ENCODE measurements at regions of chr6 and their contacts with region 1.

Region 1: GRCh38 chr6:96897383-96898240 is at the start of gene NDUFAF4:
- DNase-seq: peak; percentile 92
- ATAC-seq: peak; percentile 95
- H3K4me3 ChIP-seq: peak within 1 kb of the TSS; percentile 71 to 88 (median 74)
- H3K27ac ChIP-seq: peak within 1 kb of the TSS; percentile 87
- H3K4me1 ChIP-seq: peaks cover 16% of the 10 kb centered on the region
- H3K27me3 ChIP-seq: peaks cover 0 to 3% of the 10 kb centered on the region in 2 experiments; a peak in 2 of 5 replicates
- CTCF ChIP-seq: peak; percentile 95
- EP300 ChIP-seq: peak in 1 of 2 experiments; percentile 27; a peak in 2 of 4 replicates
- POLR2A ChIP-seq: peak; percentile 75 to 81; a peak in 3 of 4 replicates
- RAD21 ChIP-seq: peak; percentile 64
- total RNA-seq, gene NDUFAF4: 59.7 and 89.4 TPM in 2 replicates

Region 2: GRCh38 chr6:96521644-96522464 is 375.8 kb before region 1 on chr6 and contains the start of gene UFL1:
- CTCF ChIA-PET with region 1: no interaction called
- POLR2A ChIA-PET with region 1: interaction called, 3 read pairs
- in situ Hi-C with region 1: no loop called
- intact Hi-C with region 1: loop called (anchors 2 kb)
- DNase-seq: peak; percentile 85
- ATAC-seq: peak; percentile 98
- H3K4me3 ChIP-seq: peak within 1 kb of the TSS; percentile 70 to 93 (median 83)
- H3K27ac ChIP-seq: peak within 1 kb of the TSS; percentile 98
- H3K4me1 ChIP-seq: peaks cover 24% of the 10 kb centered on the region
- H3K27me3 ChIP-seq: no peaks in the 10 kb centered on the region; a peak in 1 of 5 replicates
- CTCF ChIP-seq: 0 out of 2 replicates have a peak, but pooled peaks have one; percentile 12
- EP300 ChIP-seq: no peak; a peak in 2 of 4 replicates
- POLR2A ChIP-seq: peak; percentile 98
- RAD21 ChIP-seq: no peak
- total RNA-seq, gene UFL1: 16.3 and 24.7 TPM in 2 replicates

Region 3: DNA sequence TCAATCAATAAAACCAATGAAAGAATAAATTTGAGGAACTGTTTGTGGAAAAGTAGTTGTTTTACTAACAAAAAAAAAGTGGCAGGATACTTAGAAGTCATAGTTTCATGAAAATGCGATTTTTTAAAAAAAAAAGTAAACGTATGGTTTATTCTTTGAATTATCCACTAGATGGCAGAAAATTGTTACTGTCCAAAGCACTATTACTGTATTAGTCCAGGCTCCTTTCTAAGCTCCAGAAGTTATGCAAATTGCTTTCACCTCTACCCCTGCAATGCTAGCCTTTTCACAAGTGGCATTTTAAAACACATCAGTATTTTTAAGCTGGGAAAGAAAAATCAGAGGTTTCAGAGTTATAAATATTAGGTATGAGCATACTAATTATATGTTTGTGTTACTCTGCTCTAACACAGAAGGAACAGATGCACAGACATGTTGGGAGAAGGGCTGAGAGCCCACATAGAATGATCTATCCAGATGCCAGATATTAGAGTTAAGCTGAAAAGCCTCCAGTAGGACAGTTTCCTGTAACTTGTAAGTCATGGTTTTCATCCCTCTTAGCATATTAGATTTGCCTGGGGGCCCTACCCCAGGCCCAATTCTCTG is 270.8 kb before region 1 on chr6:
- CTCF ChIA-PET with region 1: no interaction called
- POLR2A ChIA-PET with region 1: no interaction called
- in situ Hi-C with region 1: loop called (anchors 5 kb)
- intact Hi-C with region 1: loop called (anchors 1 kb)
- DNase-seq: peak; percentile 21
- ATAC-seq: peak; percentile 82
- H3K4me3 ChIP-seq: no peak overlapping the region
- H3K27ac ChIP-seq: no peak overlapping the region
- H3K4me1 ChIP-seq: no peaks in the 10 kb centered on the region
- H3K27me3 ChIP-seq: no peaks in the 10 kb centered on the region
- CTCF ChIP-seq: peak; percentile 40
- EP300 ChIP-seq: no peak
- POLR2A ChIP-seq: no peak
- RAD21 ChIP-seq: 0 out of 2 replicates have a peak, but pooled peaks have one; percentile 29

Region 4: DNA sequence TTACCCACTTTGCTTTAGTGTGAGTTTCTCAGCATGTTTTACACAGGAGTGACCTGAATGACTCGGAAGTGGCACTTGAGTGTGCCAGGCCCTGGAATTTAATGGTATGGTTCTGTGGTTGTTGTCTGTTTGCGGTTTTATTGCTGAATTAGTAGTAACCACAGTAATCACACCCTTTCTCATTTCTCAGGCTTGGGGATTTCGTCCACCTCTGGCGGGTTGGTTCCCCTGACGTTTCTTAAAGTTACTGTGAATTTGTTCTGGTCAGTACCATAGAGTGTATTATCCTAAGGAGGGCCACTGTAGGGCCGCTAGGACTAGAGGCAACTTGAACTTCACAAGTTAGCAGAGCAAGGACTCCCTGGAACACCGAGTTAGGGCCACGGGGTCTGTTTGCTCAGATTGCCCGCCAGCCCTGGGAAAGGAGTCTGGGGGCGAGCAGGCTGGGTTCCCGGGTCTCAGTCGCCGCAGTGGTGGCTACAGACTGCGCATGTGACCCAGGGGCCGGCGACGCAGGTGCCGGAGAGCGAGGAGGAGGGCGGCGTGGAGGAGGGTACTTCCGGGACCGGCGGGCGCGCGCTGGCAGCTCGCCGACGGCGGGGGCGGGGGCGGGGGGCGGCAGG is 26.4 kb after region 1 on chr6:
- CTCF ChIA-PET with region 1: no interaction called
- POLR2A ChIA-PET with region 1: interaction called, 6 read pairs
- in situ Hi-C with region 1: no loop called
- intact Hi-C with region 1: loop called (anchors 1 kb)
- DNase-seq: peak; percentile 46
- ATAC-seq: peak; percentile 87
- H3K4me3 ChIP-seq: peak overlapping the region; percentile 57 to 77 (median 59)
- H3K27ac ChIP-seq: peak overlapping the region; percentile 35
- H3K4me1 ChIP-seq: peaks cover 9% of the 10 kb centered on the region
- H3K27me3 ChIP-seq: peaks cover 0 to 1% of the 10 kb centered on the region in 2 experiments; a peak in 2 of 5 replicates
- CTCF ChIP-seq: no peak
- EP300 ChIP-seq: no peak
- POLR2A ChIP-seq: peak; percentile 47 to 79; a peak in 3 of 4 replicates
- RAD21 ChIP-seq: no peak

Region 5: GRCh38 chr6:97053643-97054411 is 156.2 kb after region 1 on chr6:
- CTCF ChIA-PET with region 1: interaction called, 8 read pairs
- POLR2A ChIA-PET with region 1: no interaction called
- in situ Hi-C with region 1: loop called (anchors 5 kb)
- intact Hi-C with region 1: loop called (anchors 1 kb)
- DNase-seq: no peak
- ATAC-seq: no peak
- H3K4me3 ChIP-seq: no peak overlapping the region
- H3K27ac ChIP-seq: no peak overlapping the region
- H3K4me1 ChIP-seq: peaks cover 9% of the 10 kb centered on the region; the same call in 1 of the 2 replicates
- H3K27me3 ChIP-seq: no peaks in the 10 kb centered on the region
- CTCF ChIP-seq: no peak
- EP300 ChIP-seq: no peak
- POLR2A ChIP-seq: no peak
- RAD21 ChIP-seq: no peak

Region 6: GRCh38 chr6:97059473-97059872 is 161.9 kb after region 1 on chr6:
- CTCF ChIA-PET with region 1: interaction called, 8 read pairs
- POLR2A ChIA-PET with region 1: no interaction called
- in situ Hi-C with region 1: loop called (anchors 5 kb)
- intact Hi-C with region 1: loop called (anchors 1 kb)
- DNase-seq: peak; percentile 17
- ATAC-seq: peak; percentile 62; the same call in 2 of the 3 replicates
- H3K4me3 ChIP-seq: no peak overlapping the region
- H3K27ac ChIP-seq: no peak overlapping the region
- H3K4me1 ChIP-seq: no peaks in the 10 kb centered on the region
- H3K27me3 ChIP-seq: peaks cover 0 to 2% of the 10 kb centered on the region in 2 experiments; a peak in 1 of 5 replicates
- CTCF ChIP-seq: peak; percentile 54
- EP300 ChIP-seq: no peak
- POLR2A ChIP-seq: no peak
- RAD21 ChIP-seq: no peak

Measured in HepG2 (cell line).